AG04449 (cell line): ENCODE measurements at regions of chr20 and their contacts with region 1.

Region 1: DNA sequence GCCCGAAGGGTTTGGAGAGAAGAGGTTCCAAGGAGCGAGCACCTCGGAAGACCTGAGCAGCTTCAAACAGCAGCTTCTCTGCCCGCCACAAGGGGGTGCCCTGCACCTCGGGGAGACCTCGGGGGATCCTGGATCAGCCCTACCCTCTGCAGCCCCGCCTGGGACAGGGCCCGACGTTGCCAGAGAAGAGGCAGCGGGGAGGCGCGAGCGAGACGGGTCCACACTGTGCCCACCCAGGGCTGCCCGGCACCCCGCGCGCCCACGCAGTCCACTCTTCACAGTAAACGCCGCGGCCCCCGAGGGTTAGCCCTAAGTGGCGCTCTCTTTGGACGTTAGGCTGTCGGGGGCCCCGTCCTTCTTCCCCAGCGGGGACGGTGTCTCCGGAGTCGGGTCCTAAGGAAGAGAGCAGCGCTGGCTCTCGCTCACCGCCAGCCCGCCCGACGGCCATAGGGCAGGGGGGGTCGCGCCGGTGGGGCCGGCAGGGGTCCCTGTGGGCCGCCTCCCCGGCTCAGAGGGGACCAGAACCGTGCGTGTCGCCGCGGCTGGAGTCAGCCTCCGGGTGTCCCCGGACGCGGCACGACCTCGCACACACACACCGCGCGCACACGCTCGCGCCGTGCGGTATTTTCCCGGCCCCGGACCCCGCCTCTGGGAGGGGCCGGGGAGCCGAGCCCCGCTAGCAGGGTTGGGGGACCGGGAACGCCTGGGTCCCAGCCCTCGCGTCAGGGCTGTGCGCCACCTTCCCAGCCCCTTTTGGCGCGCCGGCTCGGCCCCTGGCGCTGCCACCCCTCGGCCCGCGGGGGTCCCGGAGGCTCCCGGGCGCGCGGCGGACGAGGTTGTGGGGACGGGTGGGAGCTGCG is 929 bp downstream of the CDH22 start:
- DNase-seq: no peak
- H3K4me3 ChIP-seq: no peak overlapping the region
- CTCF ChIP-seq: peak; percentile 89

Region 2: GRCh38 chr20:46199198-46199597 is 108.2 kb before region 1 on chr20:
- CTCF ChIA-PET with region 1: no interaction called
- POLR2A ChIA-PET with region 1: no interaction called
- DNase-seq: no peak
- H3K4me3 ChIP-seq: no peak overlapping the region
- CTCF ChIP-seq: no peak

Region 3: DNA sequence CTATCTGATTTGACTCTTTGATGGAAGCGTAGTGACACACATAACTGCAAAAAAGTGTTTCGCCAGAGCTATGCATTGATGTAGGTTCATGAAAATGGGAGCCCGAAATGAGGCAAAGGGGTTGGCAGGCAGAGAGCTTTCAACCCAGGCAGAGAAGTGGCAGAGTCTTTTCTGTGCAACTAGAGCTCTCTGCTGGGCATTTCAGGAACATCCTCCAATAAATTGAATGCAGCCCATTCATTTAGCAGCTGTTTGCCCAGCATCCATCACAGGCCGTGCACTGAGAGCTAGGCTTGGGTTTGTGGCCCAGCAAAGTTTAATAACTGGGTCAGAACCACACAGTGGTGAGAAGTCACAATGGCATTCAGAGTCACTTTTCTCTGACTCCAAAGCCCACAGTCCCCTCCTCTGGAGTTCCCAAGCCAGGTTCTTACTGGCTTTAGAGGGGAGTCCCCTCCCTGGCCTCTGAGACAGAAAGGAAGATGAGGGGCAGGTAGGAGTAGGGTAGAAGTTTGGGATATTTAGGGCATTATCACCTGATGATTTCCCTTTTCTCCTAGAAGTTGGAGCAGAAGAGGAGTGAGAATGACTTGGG is 130.9 kb after region 1 on chr20:
- CTCF ChIA-PET with region 1: interaction called, 13 read pairs
- POLR2A ChIA-PET with region 1: no interaction called
- DNase-seq: no peak
- H3K4me3 ChIP-seq: no peak overlapping the region
- CTCF ChIP-seq: peak; percentile 42